CD8-positive, alpha-beta T cell (primary cell): ENCODE measurements at regions of chr4 and their contacts with region 1.

Region 1: DNA sequence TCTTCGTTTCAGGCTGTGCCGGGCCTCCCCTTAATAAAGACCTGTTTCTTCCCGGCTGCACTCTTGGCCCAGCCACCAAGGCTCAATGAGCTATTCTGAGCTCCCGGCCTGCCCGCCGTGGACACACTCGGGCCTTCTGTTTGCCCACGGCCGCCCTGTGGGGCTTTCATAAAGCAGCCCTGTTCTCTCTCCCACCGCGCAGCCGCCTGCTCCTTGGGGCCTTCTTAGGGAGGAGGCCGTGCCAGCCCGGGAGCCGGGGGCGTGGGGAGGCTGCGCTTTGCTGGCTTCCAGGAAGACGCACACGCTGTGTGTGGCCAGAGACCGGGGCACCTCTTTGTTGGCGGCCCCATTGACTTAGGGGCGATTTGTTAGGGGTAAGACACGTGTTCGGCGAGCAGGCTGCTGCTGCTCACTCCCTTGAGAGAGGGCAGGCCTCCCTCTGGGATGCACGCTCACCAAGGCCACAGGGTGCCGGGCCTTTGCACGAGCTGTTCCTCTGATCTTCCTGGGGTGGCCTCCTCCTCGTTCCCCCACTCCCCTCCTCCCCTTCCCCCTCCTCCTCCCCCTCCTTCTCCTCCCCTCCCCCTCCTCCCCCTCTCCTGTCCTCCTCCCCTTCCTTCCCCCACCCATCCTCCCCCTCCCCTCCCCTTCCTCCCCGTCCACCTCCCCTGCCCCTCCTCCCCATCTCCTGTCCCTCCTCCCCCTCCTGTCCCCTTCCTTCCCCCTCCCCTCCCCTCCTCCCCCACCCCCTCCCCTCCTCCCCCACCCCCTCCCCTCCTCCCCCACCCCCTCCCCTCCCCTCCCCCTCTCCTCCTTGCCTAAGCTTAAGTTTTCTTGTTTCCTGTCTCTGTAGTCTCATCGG is 11.3 kb downstream of the BLOC1S4 start:
- DNase-seq: no peak
- ATAC-seq: no peak
- H3K4me3 ChIP-seq: no peak overlapping the region
- H3K4me3 Mint-ChIP-seq: no peak overlapping the region
- H3K27ac ChIP-seq: no peak overlapping the region
- H3K27ac Mint-ChIP-seq: no peak overlapping the region
- H3K4me1 ChIP-seq: peaks cover 8% of the 10 kb centered on the region
- H3K4me1 Mint-ChIP-seq: peaks cover 10% of the 10 kb centered on the region
- H3K27me3 ChIP-seq: no peaks in the 10 kb centered on the region
- H3K27me3 Mint-ChIP-seq: no peaks in the 10 kb centered on the region
- CTCF ChIP-seq: no peak

Region 2: GRCh38 chr4:6761649-6762602 is 34.6 kb after region 1 on chr4:
- CTCF ChIA-PET with region 1: no interaction called
- POLR2A ChIA-PET with region 1: interaction called, 3 read pairs
- intact Hi-C with region 1: loop called in 1 of 2 experiments (anchors 1 kb)
- DNase-seq: peak in 6 of 9 experiments; percentile 19 to 52 (median 35)
- ATAC-seq: peak; percentile 74
- H3K4me3 ChIP-seq: no peak overlapping the region
- H3K4me3 Mint-ChIP-seq: peak overlapping the region; percentile 74
- H3K27ac ChIP-seq: no peak overlapping the region
- H3K27ac Mint-ChIP-seq: peak overlapping the region; percentile 81
- H3K4me1 ChIP-seq: peaks cover 8% of the 10 kb centered on the region
- H3K4me1 Mint-ChIP-seq: peaks cover 38% of the 10 kb centered on the region
- H3K27me3 ChIP-seq: no peaks in the 10 kb centered on the region
- H3K27me3 Mint-ChIP-seq: no peaks in the 10 kb centered on the region
- CTCF ChIP-seq: no peak

Region 3: DNA sequence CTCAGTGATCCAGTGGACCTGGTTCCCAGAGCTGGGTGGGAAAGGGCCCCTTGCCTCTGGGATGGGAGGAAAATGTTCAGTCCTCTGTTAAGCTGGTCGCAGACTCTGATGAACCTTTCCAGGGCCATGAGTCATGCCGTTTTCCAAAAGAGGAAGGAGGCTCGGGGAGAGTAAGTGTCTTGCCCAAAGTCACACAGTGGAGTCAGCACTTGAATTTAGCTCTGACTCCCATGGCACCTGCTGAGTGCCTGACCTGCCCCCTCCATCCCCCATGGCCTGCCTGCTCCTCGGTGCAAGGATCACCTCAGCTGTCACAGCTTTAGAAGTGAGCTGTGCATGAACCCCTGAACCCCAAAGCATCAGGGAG is 41.2 kb after region 1 on chr4:
- CTCF ChIA-PET with region 1: no interaction called
- POLR2A ChIA-PET with region 1: interaction called, 3 read pairs
- intact Hi-C with region 1: loop called in 1 of 2 experiments (anchors 2 kb)
- DNase-seq: no peak
- ATAC-seq: no peak
- H3K4me3 ChIP-seq: peak overlapping the region in 1 of 2 experiments; percentile 34
- H3K4me3 Mint-ChIP-seq: no peak overlapping the region
- H3K27ac ChIP-seq: no peak overlapping the region
- H3K27ac Mint-ChIP-seq: no peak overlapping the region
- H3K4me1 ChIP-seq: peaks cover 30% of the 10 kb centered on the region
- H3K4me1 Mint-ChIP-seq: peaks cover 46% of the 10 kb centered on the region
- H3K27me3 ChIP-seq: no peaks in the 10 kb centered on the region
- H3K27me3 Mint-ChIP-seq: no peaks in the 10 kb centered on the region
- CTCF ChIP-seq: no peak

Region 4: GRCh38 chr4:7217453-7218321 is 490.4 kb after region 1 on chr4:
- CTCF ChIA-PET with region 1: no interaction called
- POLR2A ChIA-PET with region 1: no interaction called
- intact Hi-C with region 1: no loop called
- DNase-seq: no peak
- ATAC-seq: no peak
- H3K4me3 ChIP-seq: no peak overlapping the region
- H3K4me3 Mint-ChIP-seq: no peak overlapping the region
- H3K27ac ChIP-seq: no peak overlapping the region
- H3K27ac Mint-ChIP-seq: no peak overlapping the region
- H3K4me1 ChIP-seq: no peaks in the 10 kb centered on the region
- H3K4me1 Mint-ChIP-seq: no peaks in the 10 kb centered on the region
- H3K27me3 ChIP-seq: no peaks in the 10 kb centered on the region
- H3K27me3 Mint-ChIP-seq: peaks cover 3% of the 10 kb centered on the region
- CTCF ChIP-seq: no peak